Right ventricle myocardium inferior (tissue), 1 donor: ENCODE measurements at regions of chr17 and their contacts with region 1.

Region 1: DNA sequence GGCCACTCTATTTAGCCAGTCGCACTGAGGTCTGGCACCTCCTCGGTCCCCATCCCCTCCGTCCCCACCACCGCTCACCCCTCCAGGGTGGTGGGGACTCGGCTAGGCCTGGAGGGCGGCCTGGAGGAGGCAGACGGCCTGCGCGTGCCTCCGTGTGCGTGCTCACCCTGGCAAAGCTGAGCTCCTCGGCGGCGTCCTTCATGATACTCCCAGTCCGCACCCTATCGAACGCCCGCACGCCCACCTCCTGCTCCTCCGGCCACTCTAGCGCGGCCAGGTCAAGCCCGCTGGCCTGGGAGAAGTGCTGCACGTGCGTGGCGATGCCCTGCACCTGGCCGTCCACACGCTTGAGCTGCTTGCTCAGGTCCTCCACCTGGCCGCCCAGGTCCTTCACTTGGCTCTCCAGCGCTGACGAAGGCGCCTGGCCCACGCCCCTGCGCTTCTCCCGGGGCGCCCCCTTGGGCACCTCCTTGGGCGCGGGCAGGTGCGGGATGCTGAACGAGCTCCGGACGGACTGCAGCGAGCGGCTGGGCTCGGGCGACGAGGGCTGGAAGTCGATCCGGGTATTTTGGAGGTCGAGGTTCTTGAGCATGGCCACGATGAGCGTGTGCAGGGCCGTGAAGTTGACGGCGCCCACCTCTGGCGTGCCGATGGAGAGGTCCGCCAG is 644 bp downstream of the QRICH2 start:
- DNase-seq: no peak
- ATAC-seq: no peak

Region 2: GRCh38 chr17:76204277-76204676 is 103.2 kb before region 1 on chr17:
- intact Hi-C with region 1: no loop called
- DNase-seq: no peak
- ATAC-seq: no peak

Region 3: GRCh38 chr17:76397687-76398487 is 90.5 kb after region 1 on chr17:
- intact Hi-C with region 1: loop called (anchors 2 kb)
- DNase-seq: peak; percentile 93
- ATAC-seq: peak; percentile 82

Region 4: GRCh38 chr17:76452660-76453430 is 145.4 kb after region 1 on chr17 and contains the start of gene UBE2O:
- intact Hi-C with region 1: loop called (anchors 10 kb)
- DNase-seq: peak; percentile 95
- ATAC-seq: peak; percentile 93
- total RNA-seq, gene UBE2O: 35.4 TPM

Region 5: GRCh38 chr17:76506408-76507349 is 199.2 kb after region 1 on chr17:
- intact Hi-C with region 1: loop called (anchors 5 kb)
- DNase-seq: peak; percentile 93
- ATAC-seq: peak; percentile 76